AG04449 (cell line): ENCODE measurements at regions of chr1 and their contacts with region 1.

Region 1: GRCh38 chr1:230849451-230850224 is 18.7 kb downstream of the C1orf198 start:
- DNase-seq: peak; percentile 80
- H3K4me3 ChIP-seq: no peak overlapping the region
- CTCF ChIP-seq: no peak

Region 2: DNA sequence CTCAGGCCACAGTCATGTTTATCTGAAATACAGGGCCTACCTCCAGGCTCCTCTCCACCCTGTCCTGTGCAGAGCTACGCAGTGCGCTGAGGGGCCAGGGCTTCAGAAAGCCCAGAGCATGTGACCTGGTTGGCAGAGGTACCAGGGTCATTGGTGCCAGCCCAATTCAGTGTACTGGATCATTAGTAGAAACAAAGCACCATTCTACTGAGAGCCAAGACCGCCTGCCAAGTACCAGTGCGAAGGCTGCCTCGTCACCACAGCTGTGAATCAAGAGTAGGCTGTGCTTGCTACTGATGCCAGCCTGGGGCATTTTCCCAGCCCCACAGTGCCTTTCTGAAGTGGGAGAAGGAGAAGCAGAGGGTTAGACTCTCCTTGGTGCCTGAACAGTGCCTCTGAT is 42.6 kb before region 1 on chr1:
- CTCF ChIA-PET with region 1: no interaction called
- POLR2A ChIA-PET with region 1: no interaction called
- DNase-seq: no peak
- H3K4me3 ChIP-seq: no peak overlapping the region
- CTCF ChIP-seq: no peak

Region 3: GRCh38 chr1:230867903-230868735 is 18.5 kb after region 1 on chr1 and contains the start of gene C1orf198:
- CTCF ChIA-PET with region 1: interaction called, 3 read pairs
- POLR2A ChIA-PET with region 1: interaction called, 24 read pairs
- DNase-seq: no peak
- H3K4me3 ChIP-seq: peak within 1 kb of the TSS; percentile 84
- CTCF ChIP-seq: no peak